ENCODE measurements at regions of chr1 and their contacts with region 1.

Region 1: DNA sequence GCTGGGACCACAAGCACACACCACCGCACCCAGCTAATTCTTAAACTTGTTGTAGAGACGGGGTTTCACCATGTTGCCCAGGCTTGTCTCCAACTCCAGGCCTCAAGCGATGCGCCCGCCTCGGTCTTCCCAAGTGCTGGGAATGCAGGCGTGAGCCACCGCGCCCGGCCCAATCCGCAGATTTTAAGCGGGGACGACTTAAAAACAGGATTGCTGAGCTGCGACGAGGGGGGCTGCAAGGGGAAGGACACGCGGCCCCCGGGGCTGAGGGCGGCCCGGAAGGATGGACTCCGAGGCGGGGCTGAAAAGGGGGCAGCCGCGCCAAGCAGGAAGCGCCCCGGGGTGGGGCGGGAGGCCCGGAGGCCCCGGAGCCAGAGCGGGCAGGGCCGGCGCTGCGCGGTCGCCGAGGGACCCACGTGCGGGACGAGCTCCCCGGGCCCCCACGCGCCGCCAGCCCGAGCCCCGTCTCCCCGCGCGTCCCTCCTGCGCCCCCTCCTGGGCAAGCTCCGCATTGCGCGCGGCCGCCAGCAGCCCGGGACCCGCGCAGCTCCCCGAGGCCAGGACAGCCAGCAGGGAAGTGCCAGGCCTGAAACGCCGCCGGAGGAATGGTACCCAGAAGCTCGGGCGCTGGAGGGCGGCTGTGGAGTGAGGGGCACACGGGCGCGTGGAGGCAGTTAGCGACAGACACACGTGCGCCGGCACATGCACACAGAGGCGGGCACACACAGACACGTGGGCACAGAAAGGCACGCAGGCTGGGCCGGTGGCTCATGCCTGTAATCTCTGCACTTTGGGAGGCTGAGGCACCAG is 5.5 kb upstream of the PRKCZ start:
- DNase-seq: peak; percentile 72 to 91 (median 90)
- ATAC-seq: peak; percentile 69 to 71
- H3K4me3 ChIP-seq: no peak overlapping the region
- H3K27ac ChIP-seq: no peak overlapping the region
- H3K4me1 ChIP-seq: no peaks in the 10 kb centered on the region
- H3K27me3 ChIP-seq: no peaks in the 10 kb centered on the region

Region 2: DNA sequence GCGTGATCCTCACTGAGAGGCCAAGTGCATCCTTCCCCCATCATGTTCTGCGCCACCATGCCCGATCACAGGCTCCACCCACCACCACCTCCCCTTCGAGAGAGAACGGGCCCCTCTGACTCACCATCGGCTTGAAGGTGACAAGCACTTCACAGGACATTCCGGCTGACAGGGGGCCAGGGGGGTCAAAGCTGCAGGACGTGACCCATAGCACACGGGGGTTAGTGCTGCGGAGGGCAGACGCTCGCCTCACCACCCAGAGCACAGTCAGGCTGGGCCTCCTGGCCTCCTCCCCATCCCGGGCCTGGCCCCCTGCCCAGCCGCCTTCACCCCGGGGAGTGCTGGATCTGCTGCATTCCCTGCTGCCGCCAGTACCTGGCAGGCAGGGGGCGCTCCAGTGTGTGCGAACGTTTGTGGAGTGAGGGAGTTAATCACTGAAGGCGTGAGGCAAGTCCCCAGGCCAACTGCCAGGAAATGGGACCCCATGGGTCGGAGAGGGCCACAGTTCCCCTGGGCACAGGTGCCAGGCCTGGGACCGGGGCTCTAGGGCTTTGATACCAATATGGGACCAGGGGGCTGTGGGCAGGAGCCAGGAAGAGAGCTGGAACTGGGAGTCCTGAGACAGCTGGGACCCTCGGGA is 84.8 kb before region 1 on chr1:
- intact Hi-C with region 1: loop called in 3 of 4 experiments (anchors 5 kb)
- DNase-seq: peak; percentile 84 to 95 (median 93)
- ATAC-seq: peak; percentile 84
- H3K4me3 ChIP-seq: no peak overlapping the region
- H3K27ac ChIP-seq: no peak overlapping the region
- H3K4me1 ChIP-seq: no peaks in the 10 kb centered on the region
- H3K27me3 ChIP-seq: no peaks in the 10 kb centered on the region

Measured in right cardiac atrium (tissue), 5 donors.